ENCODE measurements at regions of chr7 and their contacts with region 1.

Region 1: GRCh38 chr7:150420987-150421674 is 29.3 kb upstream of the GIMAP8 start:
- DNase-seq: peak; percentile 80
- H3K4me3 ChIP-seq: no peak overlapping the region
- H3K27ac ChIP-seq: no peak overlapping the region
- H3K4me1 ChIP-seq: no peaks in the 10 kb centered on the region
- H3K27me3 ChIP-seq: no peaks in the 10 kb centered on the region
- CTCF ChIP-seq: peak; percentile 80 to 81
- POLR2A ChIP-seq: no peak

Region 2: GRCh38 chr7:150356265-150356897 is 64.8 kb before region 1 on chr7:
- CTCF ChIA-PET with region 1: interaction called, 24 read pairs
- POLR2A ChIA-PET with region 1: no interaction called
- dilution Hi-C with region 1: no loop called
- intact Hi-C with region 1: loop called (anchors 1 kb)
- DNase-seq: peak; percentile 64
- H3K4me3 ChIP-seq: no peak overlapping the region
- H3K27ac ChIP-seq: no peak overlapping the region
- H3K4me1 ChIP-seq: no peaks in the 10 kb centered on the region
- H3K27me3 ChIP-seq: peaks cover 0 to 2% of the 10 kb centered on the region in 2 experiments
- CTCF ChIP-seq: peak; percentile 57 to 62
- POLR2A ChIP-seq: no peak

Measured in endothelial cell of umbilical vein (primary cell).